ENCODE measurements at regions of chr5 and their contacts with region 1.

Region 1: DNA sequence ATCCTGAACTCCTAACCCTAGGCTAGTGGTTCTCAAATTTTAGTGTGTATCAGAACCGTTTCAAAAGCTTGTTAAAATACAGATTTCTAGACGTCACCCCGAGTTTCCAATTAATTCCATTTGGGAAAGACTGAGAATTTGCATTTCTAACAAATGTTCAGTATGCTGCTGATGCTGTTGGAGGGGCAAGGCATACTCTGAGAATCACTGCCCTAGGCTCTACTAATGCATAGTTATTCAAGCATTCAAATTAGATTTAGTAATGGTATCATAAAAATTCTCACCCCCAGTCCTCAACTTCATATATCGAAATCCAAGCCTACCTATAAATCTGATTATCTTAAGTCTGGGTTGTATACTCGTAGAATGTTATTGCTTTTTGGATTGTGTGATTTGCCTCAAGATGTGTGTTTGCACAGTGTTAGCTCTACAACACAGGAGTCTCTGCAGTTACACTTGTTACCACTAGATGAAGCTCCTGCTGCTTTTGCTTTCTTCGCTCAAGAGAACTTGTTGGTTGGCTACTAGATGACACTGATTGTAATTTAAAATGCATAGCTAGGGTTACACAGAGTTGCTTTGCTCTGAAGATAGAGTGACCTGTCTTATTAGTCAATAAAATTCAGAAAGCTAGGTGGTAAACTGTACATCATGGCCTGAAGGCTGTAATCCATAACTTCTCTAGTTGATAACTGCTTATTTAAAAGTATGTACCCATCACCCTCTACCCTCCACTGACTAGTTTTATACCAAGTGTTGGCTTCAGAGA is 7.5 kb upstream of the ERAP2 start:
- DNase-seq: peak; percentile 70
- H3K4me3 ChIP-seq: no peak overlapping the region
- H3K27ac ChIP-seq: no peak overlapping the region
- H3K4me1 ChIP-seq: no peaks in the 10 kb centered on the region
- H3K27me3 ChIP-seq: no peaks in the 10 kb centered on the region
- CTCF ChIP-seq: peak; percentile 80 to 88
- POLR2A ChIP-seq: no peak

Region 2: GRCh38 chr5:95709967-95710685 is 1158.7 kb before region 1 on chr5:
- CTCF ChIA-PET with region 1: no interaction called
- POLR2A ChIA-PET with region 1: no interaction called
- dilution Hi-C with region 1: no loop called
- intact Hi-C with region 1: no loop called
- DNase-seq: no peak
- H3K4me3 ChIP-seq: no peak overlapping the region
- H3K27ac ChIP-seq: no peak overlapping the region
- H3K4me1 ChIP-seq: peaks cover 19% of the 10 kb centered on the region
- H3K27me3 ChIP-seq: no peaks in the 10 kb centered on the region
- CTCF ChIP-seq: no peak
- POLR2A ChIP-seq: no peak

Region 3: GRCh38 chr5:96517295-96517694 is 351.5 kb before region 1 on chr5:
- CTCF ChIA-PET with region 1: no interaction called
- POLR2A ChIA-PET with region 1: no interaction called
- dilution Hi-C with region 1: no loop called
- intact Hi-C with region 1: no loop called
- DNase-seq: peak; percentile 44
- H3K4me3 ChIP-seq: no peak overlapping the region
- H3K27ac ChIP-seq: no peak overlapping the region
- H3K4me1 ChIP-seq: no peaks in the 10 kb centered on the region
- H3K27me3 ChIP-seq: no peaks in the 10 kb centered on the region
- CTCF ChIP-seq: no peak
- POLR2A ChIP-seq: no peak

Region 4: DNA sequence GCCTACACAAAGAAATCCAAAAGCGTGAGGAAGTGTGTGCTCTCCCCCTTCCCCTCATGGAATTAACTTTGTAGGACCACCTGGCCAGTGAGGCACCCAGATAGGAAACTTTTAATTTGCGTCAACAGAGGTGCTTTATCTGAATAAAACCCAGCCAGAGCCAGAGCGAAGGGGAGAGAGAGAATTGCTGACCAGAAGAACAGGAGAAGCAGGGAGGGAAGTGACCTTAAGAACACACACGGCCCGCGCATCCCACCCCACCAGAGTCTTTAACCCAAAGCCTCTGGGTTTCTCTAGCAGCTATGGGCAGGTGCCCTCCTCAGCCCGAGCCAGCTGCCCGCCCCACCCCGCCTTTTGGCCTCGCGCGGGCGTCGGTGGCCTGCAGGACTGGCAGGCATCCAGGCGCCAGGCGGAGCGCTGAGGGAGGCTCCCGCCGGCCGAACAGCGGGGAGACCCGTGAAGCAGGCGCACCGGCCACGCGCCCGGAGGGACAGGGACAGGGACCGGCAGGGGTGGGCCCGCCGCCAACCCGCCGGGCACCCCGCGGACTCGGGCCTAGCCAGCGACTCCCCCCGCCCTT is 61.6 kb before region 1 on chr5:
- CTCF ChIA-PET with region 1: interaction called, 15 read pairs
- POLR2A ChIA-PET with region 1: no interaction called
- dilution Hi-C with region 1: no loop called
- intact Hi-C with region 1: loop called (anchors 2 kb)
- DNase-seq: peak; percentile 76
- H3K4me3 ChIP-seq: peak overlapping the region; percentile 22 to 83 (median 73)
- H3K27ac ChIP-seq: peak overlapping the region; percentile 88
- H3K4me1 ChIP-seq: peaks cover 9% of the 10 kb centered on the region
- H3K27me3 ChIP-seq: no peaks in the 10 kb centered on the region
- CTCF ChIP-seq: no peak
- POLR2A ChIP-seq: no peak

Region 5: GRCh38 chr5:96885518-96886338 is 16.9 kb after region 1 on chr5:
- CTCF ChIA-PET with region 1: interaction called, 17 read pairs
- POLR2A ChIA-PET with region 1: no interaction called
- dilution Hi-C with region 1: no loop called
- intact Hi-C with region 1: no loop called
- DNase-seq: no peak
- H3K4me3 ChIP-seq: no peak overlapping the region
- H3K27ac ChIP-seq: no peak overlapping the region
- H3K4me1 ChIP-seq: peaks cover 25% of the 10 kb centered on the region
- H3K27me3 ChIP-seq: no peaks in the 10 kb centered on the region
- CTCF ChIP-seq: no peak
- POLR2A ChIP-seq: no peak

Region 6: DNA sequence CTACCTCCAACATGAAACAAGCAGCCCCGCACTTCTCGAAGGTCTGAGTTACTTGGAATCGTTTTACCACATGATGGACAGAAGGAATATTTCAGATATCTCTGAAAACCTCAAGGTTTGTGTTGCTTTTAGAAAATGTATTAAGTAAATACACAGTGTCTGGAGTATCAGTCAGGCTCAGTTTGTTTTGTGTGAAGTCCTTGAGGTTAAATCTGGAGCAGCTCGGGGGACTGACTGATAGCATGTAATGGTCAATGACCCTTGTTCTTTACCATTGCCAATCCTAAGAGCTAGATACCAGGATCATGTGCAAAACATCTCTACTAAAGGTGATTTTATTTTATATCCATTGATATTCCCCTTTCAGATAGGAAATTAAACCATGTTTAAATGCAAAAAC is 40.2 kb after region 1 on chr5:
- CTCF ChIA-PET with region 1: interaction called, 24 read pairs
- POLR2A ChIA-PET with region 1: no interaction called
- dilution Hi-C with region 1: no loop called
- intact Hi-C with region 1: no loop called
- DNase-seq: no peak
- H3K4me3 ChIP-seq: no peak overlapping the region
- H3K27ac ChIP-seq: no peak overlapping the region
- H3K4me1 ChIP-seq: no peaks in the 10 kb centered on the region
- H3K27me3 ChIP-seq: no peaks in the 10 kb centered on the region
- CTCF ChIP-seq: no peak
- POLR2A ChIP-seq: no peak

Region 7: DNA sequence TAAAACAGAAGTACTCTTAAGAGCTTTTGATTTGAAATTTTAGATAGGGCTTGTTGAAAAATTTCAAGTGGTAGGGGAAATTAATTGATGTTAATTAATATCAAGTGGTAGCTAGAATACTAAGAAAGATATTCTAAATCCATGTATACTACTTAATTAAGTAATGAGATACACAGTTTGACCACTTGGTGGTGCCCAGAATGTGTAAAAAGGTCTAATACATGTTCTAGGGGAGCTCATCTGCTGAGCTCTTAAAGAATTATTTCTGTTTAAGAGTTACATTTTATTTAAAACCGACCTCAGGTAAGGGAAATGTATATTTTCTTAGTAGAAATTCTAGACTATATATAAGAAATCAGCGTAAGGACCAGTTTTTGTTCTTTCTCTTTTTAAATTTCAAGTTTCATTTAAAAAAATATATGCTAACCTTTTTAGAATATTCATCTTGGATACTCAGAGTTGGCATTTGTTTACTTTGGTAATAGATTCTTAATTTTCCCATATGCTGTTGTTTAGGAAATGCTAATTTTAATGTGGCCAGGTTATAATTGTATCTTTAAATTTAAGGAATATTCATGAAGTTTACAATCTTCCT is 128.6 kb after region 1 on chr5:
- CTCF ChIA-PET with region 1: interaction called, 60 read pairs
- POLR2A ChIA-PET with region 1: no interaction called
- dilution Hi-C with region 1: no loop called
- intact Hi-C with region 1: loop called (anchors 2 kb)
- DNase-seq: peak; percentile 66
- H3K4me3 ChIP-seq: no peak overlapping the region
- H3K27ac ChIP-seq: no peak overlapping the region
- H3K4me1 ChIP-seq: no peaks in the 10 kb centered on the region
- H3K27me3 ChIP-seq: no peaks in the 10 kb centered on the region
- CTCF ChIP-seq: peak; percentile 27 to 34
- POLR2A ChIP-seq: no peak

Region 8: DNA sequence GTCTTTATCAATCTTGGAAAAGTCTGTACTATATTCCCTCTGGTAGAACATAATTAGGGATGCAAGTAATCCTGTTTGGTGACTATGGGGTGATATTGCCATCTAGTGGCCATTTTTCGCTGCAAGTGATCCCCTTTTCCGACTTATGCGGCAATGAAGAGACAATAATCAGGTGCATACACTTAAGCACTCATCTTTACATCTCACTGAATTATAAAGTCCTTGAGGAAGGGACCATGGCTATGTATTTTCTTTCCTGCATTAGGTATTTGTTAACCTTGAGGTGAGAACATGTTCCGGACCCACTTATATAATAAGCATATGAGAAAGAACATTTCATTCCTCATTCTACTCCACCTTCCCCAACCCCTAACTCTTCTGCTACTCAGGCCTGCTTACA is 293.3 kb after region 1 on chr5:
- CTCF ChIA-PET with region 1: interaction called, 71 read pairs
- POLR2A ChIA-PET with region 1: no interaction called
- dilution Hi-C with region 1: no loop called
- intact Hi-C with region 1: loop called (anchors 1 kb)
- DNase-seq: peak; percentile 86
- H3K4me3 ChIP-seq: no peak overlapping the region
- H3K27ac ChIP-seq: no peak overlapping the region
- H3K4me1 ChIP-seq: no peaks in the 10 kb centered on the region
- H3K27me3 ChIP-seq: no peaks in the 10 kb centered on the region
- CTCF ChIP-seq: peak; percentile 68 to 79
- POLR2A ChIP-seq: no peak